ENCODE measurements at regions of chr14 and their contacts with region 1.

Region 1: DNA sequence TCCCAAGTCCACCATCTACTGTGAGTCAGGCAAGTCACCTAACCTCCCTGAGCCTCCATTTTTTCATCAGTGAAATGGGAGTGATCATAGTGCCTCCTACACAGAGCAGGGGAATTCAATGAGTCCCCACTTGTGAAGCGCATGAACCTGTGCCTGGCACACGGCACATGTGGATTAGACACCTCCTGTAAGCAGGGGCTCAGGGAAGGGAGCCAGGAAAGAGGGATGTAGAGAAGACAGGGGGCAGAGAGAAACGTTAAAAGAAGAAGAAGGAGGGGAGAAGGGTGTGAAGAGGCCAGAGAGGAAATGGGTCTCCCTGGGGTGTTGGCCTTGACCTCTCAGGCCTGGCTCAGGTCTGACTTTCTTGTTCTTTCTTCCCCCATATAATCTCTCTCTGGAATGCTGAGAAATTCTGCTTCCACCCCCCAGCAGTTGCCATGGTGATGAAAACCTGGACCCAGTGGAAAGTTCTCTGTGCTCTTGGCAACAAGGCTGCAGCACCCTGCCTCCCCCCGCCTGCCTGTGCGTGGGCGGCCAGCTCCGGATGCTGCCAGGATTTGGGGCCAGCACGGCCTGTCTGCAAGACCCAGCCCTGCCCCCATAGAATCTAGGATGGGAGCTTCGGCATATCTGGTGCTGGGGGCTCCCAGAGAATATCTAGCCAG is 94.5 kb downstream of the CALM1 start:
- DNase-seq: peak; percentile 80
- ATAC-seq: peak; percentile 90

Region 2: DNA sequence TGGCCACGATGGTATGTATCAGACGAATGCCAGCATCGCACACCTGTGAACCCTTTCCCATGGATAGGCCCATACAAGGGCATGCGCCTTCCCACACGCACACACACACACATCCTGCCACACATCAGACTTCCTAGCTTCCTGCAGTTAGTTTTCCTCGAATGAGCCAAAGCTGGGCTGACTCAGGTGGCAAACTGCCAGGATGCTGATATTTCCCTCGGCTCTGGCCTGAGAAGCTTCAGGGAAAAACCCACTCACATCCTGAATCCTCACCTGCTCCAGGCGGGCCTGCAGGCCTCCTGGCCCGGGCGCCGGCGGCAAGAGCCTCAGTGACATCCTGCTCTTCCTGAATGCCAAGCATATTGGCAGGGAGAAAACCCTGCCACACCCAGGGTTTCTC is 72.2 kb before region 1 on chr14:
- intact Hi-C with region 1: no loop called
- DNase-seq: peak; percentile 86
- ATAC-seq: peak; percentile 66

Region 3: DNA sequence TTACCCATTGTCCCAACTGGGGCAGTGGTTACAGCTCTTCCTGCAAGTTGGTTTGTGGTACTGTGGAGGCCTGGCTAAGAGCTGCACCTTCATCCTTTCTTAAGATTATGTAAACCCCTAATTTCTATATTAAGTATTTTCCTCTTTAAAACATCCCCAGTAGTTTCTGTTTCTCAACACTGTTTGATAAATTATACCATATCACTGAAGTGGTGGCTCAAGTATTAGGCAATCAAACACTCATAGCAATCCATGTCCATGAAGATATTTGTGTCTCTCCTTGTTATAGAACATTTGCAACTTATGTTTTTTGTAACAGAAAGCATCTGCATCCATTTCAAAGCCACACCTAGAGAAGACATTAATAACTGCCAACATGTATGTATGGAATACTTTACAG is 1583.2 kb after region 1 on chr14:
- intact Hi-C with region 1: loop called (anchors 5 kb)
- DNase-seq: no peak
- ATAC-seq: no peak

Measured in sciatic nerve (tissue), 2 donors.